Heart left ventricle (tissue), 16 donors: ENCODE measurements at regions of chr5 and their contacts with region 1.

Region 1: GRCh38 chr5:77645158-77645994 is 6.9 kb upstream of the OTP start:
- DNase-seq: peak in 2 of 5 donors; percentile 28 to 69
- ATAC-seq: peak; percentile 32 to 84 (median 68)
- H3K4me3 ChIP-seq: peak overlapping the region in 6 of 12 donors; percentile 15 to 41 (median 31)
- H3K27ac ChIP-seq: no peak overlapping the region
- H3K4me1 ChIP-seq: peaks cover 0 to 38% (median 9%) of the 10 kb centered on the region in 12 donors
- H3K27me3 ChIP-seq: peaks cover 45 to 95% (median 71%) of the 10 kb centered on the region in 9 donors
- CTCF ChIP-seq: peak; percentile 20 to 84 (median 48)
- POLR2A ChIP-seq: no peak

Region 2: DNA sequence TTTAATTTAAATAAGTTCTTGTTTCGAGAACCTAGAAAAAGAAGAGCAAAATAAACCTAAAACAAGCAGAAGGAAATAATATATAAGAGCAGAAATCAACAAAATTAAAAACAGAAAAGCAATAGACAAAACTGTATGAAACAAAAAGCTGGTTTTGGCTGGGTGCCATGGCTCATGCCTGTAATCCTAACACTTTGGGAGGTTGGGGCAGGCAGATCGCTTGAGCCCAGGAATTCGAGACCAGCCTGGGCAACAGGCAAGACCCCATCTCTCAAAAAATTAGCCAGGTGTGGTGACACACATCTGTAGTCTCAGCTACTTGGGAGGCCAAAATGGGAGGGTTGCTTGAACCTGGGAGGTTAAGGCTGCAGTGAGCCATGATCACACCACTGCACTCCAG is 52.3 kb after region 1 on chr5:
- intact Hi-C with region 1: no loop called
- DNase-seq: peak in 1 of 5 donors; percentile 24
- ATAC-seq: no peak
- H3K4me3 ChIP-seq: no peak overlapping the region
- H3K27ac ChIP-seq: no peak overlapping the region
- H3K4me1 ChIP-seq: peaks cover 0 to 3% (median 0%) of the 10 kb centered on the region in 12 donors
- H3K27me3 ChIP-seq: no peaks in the 10 kb centered on the region
- CTCF ChIP-seq: no peak
- POLR2A ChIP-seq: no peak

Region 3: DNA sequence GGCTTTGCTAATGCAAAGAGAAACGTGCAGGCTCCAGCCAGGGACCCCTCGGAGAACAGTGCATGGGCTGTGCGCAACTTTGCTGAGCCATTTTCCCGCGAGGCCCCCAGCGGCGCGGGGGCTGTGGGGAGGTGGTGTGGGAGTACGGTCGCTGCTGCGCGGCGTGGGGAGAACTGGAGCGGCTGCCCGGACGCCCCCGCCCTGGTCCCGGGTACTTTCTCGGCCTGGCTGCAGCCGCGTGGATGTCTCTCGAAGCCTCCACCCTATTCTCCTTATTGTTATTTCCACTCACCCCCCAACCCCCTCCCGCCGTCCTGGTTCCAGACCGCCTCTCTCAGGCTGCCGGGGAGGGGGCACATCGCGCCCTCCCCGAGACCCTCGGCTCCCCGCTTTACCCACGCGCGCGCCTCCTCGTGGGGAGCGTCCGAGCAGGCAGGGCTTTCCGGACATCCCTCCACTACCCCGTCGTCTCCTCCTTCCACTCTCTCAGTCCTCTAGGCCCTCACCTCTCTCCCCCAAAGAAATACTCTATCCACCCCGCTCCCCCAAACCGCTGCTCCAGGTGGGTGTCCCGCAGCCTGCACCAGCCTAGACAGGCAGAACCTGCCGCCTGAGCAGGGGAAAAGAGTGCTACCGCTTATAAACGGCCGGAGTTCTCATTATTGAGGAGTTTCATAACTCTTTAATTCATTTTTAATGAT is 199.4 kb after region 1 on chr5:
- intact Hi-C with region 1: loop called in 2 of 10 experiments (anchors 5 to 10 kb)
- DNase-seq: no peak
- ATAC-seq: peak in 3 of 4 donors; percentile 44 to 67 (median 45)
- H3K4me3 ChIP-seq: peak overlapping the region; percentile 22 to 65 (median 52)
- H3K27ac ChIP-seq: no peak overlapping the region
- H3K4me1 ChIP-seq: peaks cover 0 to 15% (median 4%) of the 10 kb centered on the region in 12 donors
- H3K27me3 ChIP-seq: peaks cover 0 to 41% (median 4%) of the 10 kb centered on the region in 9 donors
- CTCF ChIP-seq: peak in 7 of 12 donors; percentile 9 to 36 (median 24)
- POLR2A ChIP-seq: no peak